ENCODE measurements at regions of chr5 and their contacts with region 1.

Region 1: DNA sequence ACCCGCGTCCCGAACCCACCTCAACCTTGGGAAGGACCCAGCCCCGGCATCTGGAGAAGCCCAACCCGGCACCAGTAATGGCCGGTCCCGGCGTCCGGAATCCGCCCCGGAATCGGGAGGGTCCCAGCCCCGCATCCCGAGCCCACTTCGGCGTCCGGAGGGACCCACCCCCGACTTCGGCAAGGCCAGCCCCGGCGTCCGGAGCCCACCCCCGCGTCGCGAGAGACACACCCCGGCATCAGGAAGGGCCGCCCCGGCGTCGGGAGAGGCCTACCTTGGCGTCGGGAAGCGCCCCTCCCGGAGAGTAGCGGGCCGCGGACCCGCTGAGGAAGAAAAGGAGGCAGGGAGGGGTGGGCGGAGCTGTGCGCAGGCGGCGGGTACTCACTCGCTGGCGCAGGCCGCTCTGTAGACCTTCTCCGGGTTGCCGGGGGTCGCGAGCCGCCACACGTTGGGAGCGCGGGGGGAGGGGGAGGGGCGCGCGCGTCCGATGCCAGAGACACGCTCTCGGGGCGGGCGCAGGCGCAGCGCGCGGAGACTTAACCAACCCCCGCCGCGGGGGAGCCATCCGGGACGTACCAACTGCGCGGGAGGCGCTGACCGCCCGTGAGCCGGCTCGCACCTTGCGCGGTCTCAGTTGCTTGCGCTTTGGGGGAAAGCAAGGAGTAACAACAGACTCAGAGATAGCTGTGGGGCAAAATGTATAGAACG is at the start of gene UIMC1:
- DNase-seq: peak; percentile 95
- CTCF ChIP-seq: no peak

Region 2: GRCh38 chr5:176744584-176744965 is 261.8 kb before region 1 on chr5:
- CTCF ChIA-PET with region 1: no interaction called
- POLR2A ChIA-PET with region 1: no interaction called
- DNase-seq: peak; percentile 19
- CTCF ChIP-seq: peak; percentile 30

Region 3: DNA sequence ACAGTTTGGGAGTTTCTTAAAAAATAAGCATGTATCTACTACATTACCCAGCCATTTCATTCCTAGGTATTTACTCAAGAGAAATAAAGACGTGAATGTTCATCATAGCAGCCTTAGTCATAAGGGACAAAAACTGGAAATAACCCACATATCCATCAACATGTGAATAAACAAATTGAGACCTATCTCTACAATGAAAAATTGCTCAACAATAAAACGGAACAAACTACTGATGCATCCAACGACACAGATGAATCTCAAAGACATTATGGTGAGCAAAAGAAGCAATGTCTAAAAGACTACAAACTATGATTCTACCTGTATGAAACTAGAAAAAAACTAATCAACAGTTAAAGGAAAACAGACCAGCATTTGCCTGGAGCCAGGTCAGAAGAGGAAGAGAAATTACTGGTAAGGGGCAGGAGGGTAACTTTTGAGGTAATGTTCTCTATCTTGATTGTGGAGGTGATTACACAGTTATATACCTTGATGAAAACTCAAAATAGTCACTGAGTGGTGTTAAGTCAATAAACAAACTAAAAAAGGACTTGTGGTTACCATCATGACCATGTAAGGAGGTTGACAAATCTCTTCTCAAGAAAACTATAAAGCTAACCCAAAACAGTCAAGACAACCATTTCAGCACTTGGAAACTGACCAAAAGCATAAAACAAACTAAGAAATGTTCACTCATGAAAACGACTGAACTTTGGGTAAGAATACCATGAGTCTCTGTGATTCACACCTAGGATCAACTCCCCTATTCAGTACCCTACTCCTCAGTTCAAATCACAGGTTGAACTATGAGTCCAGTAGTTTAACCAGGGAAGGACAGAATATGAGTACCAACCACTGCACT is 10.3 kb before region 1 on chr5:
- CTCF ChIA-PET with region 1: interaction called, 10 read pairs
- POLR2A ChIA-PET with region 1: no interaction called
- DNase-seq: peak; percentile 26
- CTCF ChIP-seq: no peak

Region 4: GRCh38 chr5:177022384-177023308 is 16.2 kb after region 1 on chr5 and contains the start of gene ZNF346:
- CTCF ChIA-PET with region 1: interaction called, 29 read pairs
- POLR2A ChIA-PET with region 1: interaction called, 4 read pairs
- DNase-seq: peak; percentile 98
- CTCF ChIP-seq: peak; percentile 58

Region 5: GRCh38 chr5:177105691-177106476 is 99.5 kb after region 1 on chr5:
- CTCF ChIA-PET with region 1: no interaction called
- POLR2A ChIA-PET with region 1: no interaction called
- DNase-seq: no peak
- CTCF ChIP-seq: no peak

Measured in GM10248 (cell line).